Mucosa of descending colon (tissue), 3 donors: ENCODE measurements at regions of chr17 and their contacts with region 1.

Region 1: GRCh38 chr17:61635913-61636432 is 45.0 kb upstream of the NACA2 start:
- DNase-seq: peak in 2 of 3 donors; percentile 20 to 75
- ATAC-seq: peak; percentile 48
- H3K4me3 ChIP-seq: no peak overlapping the region
- H3K4me1 ChIP-seq: no peaks in the 10 kb centered on the region
- CTCF ChIP-seq: no peak

Region 2: DNA sequence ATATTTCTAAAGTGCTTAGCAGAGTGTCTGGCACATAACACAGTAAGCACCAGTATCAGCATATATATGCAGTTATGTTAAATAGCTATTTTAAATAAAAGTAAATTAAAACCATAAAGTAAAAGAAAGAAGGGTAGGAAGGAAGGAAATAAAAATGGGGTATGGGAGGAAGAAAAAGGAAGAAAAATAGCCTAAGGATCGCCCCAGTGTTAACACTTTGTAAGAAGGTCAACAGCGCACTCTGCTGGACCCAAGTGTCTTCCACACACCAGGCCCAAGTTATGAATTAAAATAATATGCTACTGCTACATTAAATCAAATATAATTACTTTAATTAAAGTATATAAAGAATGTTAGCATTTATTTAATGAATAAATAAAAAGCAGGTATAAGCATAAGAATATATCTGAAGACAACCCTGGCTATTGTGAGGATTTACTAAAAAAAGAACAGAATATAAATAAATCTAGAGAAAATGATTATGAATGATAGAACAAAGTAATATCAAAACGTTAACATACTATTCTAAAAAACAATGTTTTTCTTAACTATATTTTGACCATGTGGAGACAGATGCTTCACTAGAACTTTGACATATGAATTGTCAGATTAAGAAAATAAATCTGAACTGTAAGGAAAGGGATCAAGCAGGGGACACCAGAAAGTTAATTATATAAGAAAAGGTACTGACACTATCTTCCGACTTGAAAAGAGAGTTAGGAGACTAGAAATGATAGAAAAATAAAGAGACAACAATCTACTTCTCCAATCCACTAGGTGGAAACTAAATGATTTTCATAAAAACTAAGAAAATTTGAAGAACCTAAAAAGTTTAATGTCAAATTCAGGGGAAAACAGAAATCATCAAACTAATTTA is 201.4 kb after region 1 on chr17:
- intact Hi-C with region 1: loop called in 1 of 2 experiments (anchors 10 kb)
- DNase-seq: peak in 2 of 3 donors; percentile 49 to 80
- ATAC-seq: peak; percentile 68
- H3K4me3 ChIP-seq: no peak overlapping the region
- H3K4me1 ChIP-seq: no peaks in the 10 kb centered on the region
- CTCF ChIP-seq: peak; percentile 44